Gastrocnemius medialis (tissue), 4 donors: ENCODE measurements at regions of chr20 and their contacts with region 1.

Region 1: GRCh38 chr20:51595058-51595532 is 52.6 kb upstream of the NFATC2 start:
- DNase-seq: peak; percentile 81 to 87
- ATAC-seq: peak; percentile 97 to 99
- H3K4me3 ChIP-seq: no peak overlapping the region
- H3K27ac ChIP-seq: no peak overlapping the region
- H3K4me1 ChIP-seq: peaks cover 0 to 10% of the 10 kb centered on the region in 2 donors
- H3K27me3 ChIP-seq: no peaks in the 10 kb centered on the region
- CTCF ChIP-seq: peak; percentile 84 to 92 (median 86)
- POLR2A ChIP-seq: no peak

Region 2: GRCh38 chr20:50987592-50988210 is 607.4 kb before region 1 on chr20:
- in situ Hi-C with region 1: loop called in 1 of 4 experiments (anchors 25 kb)
- intact Hi-C with region 1: loop called (anchors 10 kb)
- DNase-seq: peak; percentile 48
- ATAC-seq: peak; percentile 98 to 99
- H3K4me3 ChIP-seq: no peak overlapping the region
- H3K27ac ChIP-seq: no peak overlapping the region
- H3K4me1 ChIP-seq: peaks cover 0 to 3% of the 10 kb centered on the region in 2 donors
- H3K27me3 ChIP-seq: peaks cover 15 to 24% (median 21%) of the 10 kb centered on the region in 3 donors
- CTCF ChIP-seq: peak; percentile 74 to 88 (median 84)
- POLR2A ChIP-seq: no peak

Region 3: DNA sequence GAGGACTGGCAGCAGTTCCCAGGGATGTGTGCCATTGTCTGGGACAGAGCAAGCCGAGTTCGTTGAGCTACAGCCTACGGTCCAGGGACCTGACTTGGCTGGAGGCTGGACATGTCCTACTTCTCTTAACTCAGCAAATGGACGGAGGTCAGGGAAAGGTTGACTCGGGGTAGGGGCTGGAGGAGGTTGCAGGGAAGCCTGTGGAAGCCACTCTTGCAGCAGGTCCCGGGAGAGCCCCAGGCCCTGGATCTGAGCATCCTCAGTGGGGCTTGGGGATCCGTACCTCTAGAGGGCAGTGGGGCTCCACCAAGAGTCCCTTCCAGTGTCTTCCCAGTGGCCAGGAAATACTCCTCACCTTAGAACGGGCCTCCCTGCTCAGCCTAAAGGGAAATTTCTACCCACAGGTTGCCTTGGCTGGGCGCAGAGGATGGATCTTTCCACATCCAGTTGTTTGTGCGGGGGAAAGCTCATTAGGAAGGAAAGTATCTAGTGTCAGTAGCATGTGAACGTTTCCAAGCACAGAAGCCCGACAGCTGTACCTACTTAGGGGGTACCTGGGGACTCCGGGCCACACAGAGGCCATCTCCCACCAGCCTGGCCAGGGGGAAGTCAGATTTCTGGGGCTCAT is 222.8 kb before region 1 on chr20:
- in situ Hi-C with region 1: loop called (anchors 5 to 10 kb)
- intact Hi-C with region 1: loop called (anchors 1 kb)
- DNase-seq: peak; percentile 42
- ATAC-seq: peak; percentile 94 to 97
- H3K4me3 ChIP-seq: no peak overlapping the region
- H3K27ac ChIP-seq: no peak overlapping the region
- H3K4me1 ChIP-seq: no peaks in the 10 kb centered on the region
- H3K27me3 ChIP-seq: no peaks in the 10 kb centered on the region
- CTCF ChIP-seq: peak; percentile 74 to 90 (median 87)
- POLR2A ChIP-seq: no peak

Region 4: GRCh38 chr20:51385646-51386530 is 209.2 kb before region 1 on chr20:
- in situ Hi-C with region 1: no loop called
- intact Hi-C with region 1: loop called (anchors 1 kb)
- DNase-seq: no peak
- ATAC-seq: no peak
- H3K4me3 ChIP-seq: no peak overlapping the region
- H3K27ac ChIP-seq: no peak overlapping the region
- H3K4me1 ChIP-seq: peaks cover 25 to 30% of the 10 kb centered on the region in 2 donors
- H3K27me3 ChIP-seq: no peaks in the 10 kb centered on the region
- CTCF ChIP-seq: peak; percentile 7 to 54 (median 42)
- POLR2A ChIP-seq: no peak

Region 5: GRCh38 chr20:51541189-51542032 is 53.7 kb before region 1 on chr20:
- in situ Hi-C with region 1: no loop called
- intact Hi-C with region 1: loop called (anchors 5 kb)
- DNase-seq: peak; percentile 42 to 64
- ATAC-seq: peak; percentile 24 to 35
- H3K4me3 ChIP-seq: peak overlapping the region; percentile 35 to 62 (median 53)
- H3K27ac ChIP-seq: peak overlapping the region; percentile 75 to 93 (median 82)
- H3K4me1 ChIP-seq: peaks cover 31 to 35% of the 10 kb centered on the region in 2 donors
- H3K27me3 ChIP-seq: no peaks in the 10 kb centered on the region
- CTCF ChIP-seq: no peak
- POLR2A ChIP-seq: no peak